SK-N-SH (cell line): ENCODE measurements at regions of chr14 and their contacts with region 1.

Region 1: GRCh38 chr14:52043690-52044089 is 25.2 kb downstream of the NID2 start:
- DNase-seq: peak; percentile 72
- H3K4me3 ChIP-seq: no peak overlapping the region
- H3K27ac ChIP-seq: peak overlapping the region in 1 of 2 experiments; percentile 93; a peak in 1 of 4 replicates
- H3K4me1 ChIP-seq: peaks cover 0 to 20% of the 10 kb centered on the region in 2 experiments; a peak in 3 of 4 replicates
- H3K27me3 ChIP-seq: no peaks in the 10 kb centered on the region
- CTCF ChIP-seq: peak; percentile 59
- EP300 ChIP-seq: no peak
- RAD21 ChIP-seq: peak; percentile 63

Region 2: GRCh38 chr14:52068615-52069303 is 25.1 kb after region 1 on chr14 and contains the start of gene NID2:
- CTCF ChIA-PET with region 1: interaction called, 45 read pairs
- POLR2A ChIA-PET with region 1: no interaction called
- DNase-seq: peak; percentile 98
- H3K4me3 ChIP-seq: peak within 1 kb of the TSS; percentile 73 to 79
- H3K27ac ChIP-seq: peak within 1 kb of the TSS; percentile 36 to 71; a peak in 3 of 4 replicates
- H3K4me1 ChIP-seq: peaks cover 14 to 26% of the 10 kb centered on the region in 2 experiments; a peak in 3 of 4 replicates
- H3K27me3 ChIP-seq: no peaks in the 10 kb centered on the region
- CTCF ChIP-seq: peak; percentile 25
- EP300 ChIP-seq: no peak
- RAD21 ChIP-seq: no peak
- polyA plus RNA-seq, gene NID2: 15.9 and 22.7 TPM in 2 replicates

Region 3: GRCh38 chr14:52131640-52132320 is 88.1 kb after region 1 on chr14:
- CTCF ChIA-PET with region 1: interaction called, 16 read pairs
- POLR2A ChIA-PET with region 1: no interaction called
- DNase-seq: peak; percentile 89
- H3K4me3 ChIP-seq: no peak overlapping the region
- H3K27ac ChIP-seq: no peak overlapping the region
- H3K4me1 ChIP-seq: peaks cover 0 to 5% of the 10 kb centered on the region in 2 experiments; a peak in 3 of 4 replicates
- H3K27me3 ChIP-seq: no peaks in the 10 kb centered on the region
- CTCF ChIP-seq: peak; percentile 86
- EP300 ChIP-seq: no peak
- RAD21 ChIP-seq: peak; percentile 92